ENCODE measurements at regions of chr1 and their contacts with region 1.

Region 1: DNA sequence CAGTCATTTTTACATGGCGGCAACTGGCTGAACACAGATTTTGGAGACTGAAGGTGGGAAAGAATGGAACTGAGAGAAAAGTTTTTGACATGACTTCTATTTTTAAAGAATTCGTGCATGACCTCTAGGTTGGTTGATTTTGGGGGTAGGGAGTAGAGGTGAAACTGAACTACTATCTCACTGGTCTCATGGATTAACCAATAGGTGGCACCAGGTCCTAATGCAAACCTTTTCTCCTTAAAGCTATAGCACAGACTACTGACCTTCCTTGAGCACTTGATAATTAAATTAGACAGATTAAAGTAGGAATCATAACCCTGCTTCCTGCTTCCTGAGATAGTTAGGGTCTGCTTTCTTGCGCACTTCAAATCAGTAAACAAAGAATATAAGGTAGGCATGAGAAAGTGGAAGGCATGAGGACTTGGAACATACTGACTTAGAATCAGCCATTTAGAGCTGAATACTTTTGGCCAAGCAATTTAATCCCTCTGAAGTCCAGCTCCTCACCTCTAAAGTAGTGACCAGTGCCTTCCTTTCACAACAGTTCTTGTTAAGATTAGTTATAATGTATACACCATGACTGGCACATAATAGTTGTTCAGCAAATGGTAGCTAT is 206.0 kb downstream of the CENPF start:
- DNase-seq: peak; percentile 48
- H3K4me3 Mint-ChIP-seq: no peak overlapping the region
- H3K27ac Mint-ChIP-seq: no peak overlapping the region
- H3K4me1 Mint-ChIP-seq: no peaks in the 10 kb centered on the region
- H3K27me3 Mint-ChIP-seq: no peaks in the 10 kb centered on the region
- CTCF ChIP-seq: peak; percentile 60

Region 2: DNA sequence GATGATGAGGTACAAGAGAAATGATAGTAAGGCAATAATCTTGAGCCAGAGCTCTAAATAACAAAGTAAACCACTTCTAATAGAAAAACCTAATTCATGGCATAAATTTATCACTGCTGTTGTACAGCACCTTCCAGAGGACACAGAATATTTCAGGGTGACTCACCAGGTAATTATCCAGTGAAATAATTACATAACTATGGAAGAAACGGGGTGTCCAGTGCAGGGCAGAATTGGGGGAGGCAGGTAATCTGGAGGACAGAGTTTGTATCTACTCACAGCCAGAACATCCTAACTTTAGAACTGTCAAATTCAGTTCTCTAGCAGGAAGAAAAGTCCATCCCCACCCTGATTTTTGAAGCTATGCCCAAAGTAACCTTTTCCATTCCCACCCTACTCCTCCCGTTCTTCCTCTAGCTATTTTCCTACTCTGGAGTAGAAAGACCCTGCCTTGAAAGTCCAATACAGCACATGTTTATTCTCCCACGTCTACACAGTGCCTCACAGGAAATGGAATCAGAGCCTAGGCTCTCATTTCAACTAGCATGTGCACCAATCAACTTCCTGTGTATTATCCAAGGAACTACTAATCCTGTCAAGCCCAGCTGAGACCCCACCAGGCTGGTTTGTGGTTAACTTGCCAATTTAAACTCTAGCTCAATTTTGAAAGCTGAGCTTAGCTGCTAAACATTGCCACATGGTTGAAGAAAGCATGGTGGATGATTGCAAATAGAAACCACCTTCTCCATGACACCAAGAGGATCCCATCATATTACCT is 354.1 kb before region 1 on chr1:
- CTCF ChIA-PET with region 1: no interaction called
- intact Hi-C with region 1: no loop called
- DNase-seq: no peak
- H3K4me3 Mint-ChIP-seq: peak overlapping the region; percentile 46
- H3K27ac Mint-ChIP-seq: peak overlapping the region; percentile 61
- H3K4me1 Mint-ChIP-seq: peaks cover 59% of the 10 kb centered on the region
- H3K27me3 Mint-ChIP-seq: no peaks in the 10 kb centered on the region
- CTCF ChIP-seq: no peak

Region 3: GRCh38 chr1:214791961-214792360 is 17.0 kb before region 1 on chr1:
- CTCF ChIA-PET with region 1: no interaction called
- intact Hi-C with region 1: no loop called
- DNase-seq: no peak
- H3K4me3 Mint-ChIP-seq: no peak overlapping the region
- H3K27ac Mint-ChIP-seq: no peak overlapping the region
- H3K4me1 Mint-ChIP-seq: no peaks in the 10 kb centered on the region
- H3K27me3 Mint-ChIP-seq: peaks cover 16% of the 10 kb centered on the region
- CTCF ChIP-seq: no peak

Region 4: DNA sequence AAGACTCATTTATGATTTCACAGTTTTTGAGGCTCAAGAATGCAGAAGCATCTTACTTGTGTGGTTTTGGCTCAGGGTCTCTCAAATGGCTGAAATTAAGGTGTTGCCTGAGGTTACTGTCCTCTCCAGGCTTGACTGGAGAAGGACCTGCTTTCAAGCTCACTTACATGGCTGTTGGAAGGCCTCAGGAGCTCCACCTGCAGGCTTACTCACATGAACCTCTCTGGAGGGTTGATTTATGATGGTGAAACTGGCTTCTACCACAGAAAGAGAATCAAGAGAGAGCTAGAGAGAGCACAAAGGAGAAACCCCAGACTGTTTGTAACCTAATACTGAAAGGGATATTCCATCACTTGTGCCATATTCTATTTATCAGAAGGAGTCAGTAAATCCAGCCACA is 267.4 kb after region 1 on chr1:
- CTCF ChIA-PET with region 1: interaction called, 16 read pairs
- intact Hi-C with region 1: loop called (anchors 1 kb)
- DNase-seq: peak; percentile 61
- H3K4me3 Mint-ChIP-seq: no peak overlapping the region
- H3K27ac Mint-ChIP-seq: no peak overlapping the region
- H3K4me1 Mint-ChIP-seq: no peaks in the 10 kb centered on the region
- H3K27me3 Mint-ChIP-seq: no peaks in the 10 kb centered on the region
- CTCF ChIP-seq: peak; percentile 48

Region 5: DNA sequence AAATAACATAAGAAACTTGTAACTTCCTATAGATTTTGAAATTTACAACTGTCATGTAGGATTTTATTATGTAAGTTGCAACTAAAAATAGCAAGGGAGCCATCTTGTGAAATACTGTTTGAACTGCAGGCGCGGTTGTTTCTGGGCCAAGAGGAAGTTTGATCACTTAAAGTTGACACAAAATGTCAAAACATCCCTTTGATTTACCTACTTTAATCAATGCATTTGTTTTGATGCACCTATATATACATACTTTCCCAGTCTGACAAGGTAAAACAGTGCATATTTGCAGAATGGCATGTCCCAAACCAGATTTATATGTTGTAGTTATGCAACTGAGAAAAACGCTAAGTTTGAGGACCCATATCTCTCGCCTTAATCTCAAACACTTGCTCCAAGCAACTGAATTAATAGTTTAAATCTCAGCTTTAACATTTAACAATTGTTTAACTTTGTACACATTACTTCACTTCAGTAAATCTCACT is 337.4 kb after region 1 on chr1:
- CTCF ChIA-PET with region 1: interaction called, 13 read pairs
- intact Hi-C with region 1: loop called (anchors 1 kb)
- DNase-seq: peak; percentile 40
- H3K4me3 Mint-ChIP-seq: no peak overlapping the region
- H3K27ac Mint-ChIP-seq: no peak overlapping the region
- H3K4me1 Mint-ChIP-seq: no peaks in the 10 kb centered on the region
- H3K27me3 Mint-ChIP-seq: no peaks in the 10 kb centered on the region
- CTCF ChIP-seq: peak; percentile 64

Region 6: DNA sequence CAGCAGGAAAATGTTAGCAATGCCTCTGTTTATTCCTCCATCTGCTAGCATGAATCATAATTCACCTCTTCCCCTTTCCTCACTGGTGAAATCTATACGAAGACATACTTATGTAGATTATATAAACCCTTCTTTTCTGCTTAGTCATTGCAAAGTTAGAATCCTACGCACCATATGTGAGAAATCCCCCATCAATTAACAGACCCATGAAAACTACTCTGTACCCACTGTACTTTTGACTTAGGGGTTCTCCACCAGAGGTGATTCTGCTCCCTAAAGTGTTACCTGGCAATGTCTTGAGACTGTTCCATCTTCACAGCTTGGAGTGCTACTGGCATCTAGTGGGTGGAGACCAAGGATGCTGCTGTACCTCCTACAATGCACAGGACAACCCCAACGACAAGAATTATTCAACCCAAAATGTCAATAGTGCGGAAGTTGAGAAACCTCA is 708.5 kb after region 1 on chr1:
- CTCF ChIA-PET with region 1: interaction called, 3 read pairs
- intact Hi-C with region 1: loop called (anchors 2 kb)
- DNase-seq: peak; percentile 32
- H3K4me3 Mint-ChIP-seq: no peak overlapping the region
- H3K27ac Mint-ChIP-seq: no peak overlapping the region
- H3K4me1 Mint-ChIP-seq: peaks cover 9% of the 10 kb centered on the region
- H3K27me3 Mint-ChIP-seq: no peaks in the 10 kb centered on the region
- CTCF ChIP-seq: no peak

Measured in Calu3 (cell line).